Caki2 (cell line): ENCODE measurements at regions of chr2 and their contacts with region 1.

Region 1: DNA sequence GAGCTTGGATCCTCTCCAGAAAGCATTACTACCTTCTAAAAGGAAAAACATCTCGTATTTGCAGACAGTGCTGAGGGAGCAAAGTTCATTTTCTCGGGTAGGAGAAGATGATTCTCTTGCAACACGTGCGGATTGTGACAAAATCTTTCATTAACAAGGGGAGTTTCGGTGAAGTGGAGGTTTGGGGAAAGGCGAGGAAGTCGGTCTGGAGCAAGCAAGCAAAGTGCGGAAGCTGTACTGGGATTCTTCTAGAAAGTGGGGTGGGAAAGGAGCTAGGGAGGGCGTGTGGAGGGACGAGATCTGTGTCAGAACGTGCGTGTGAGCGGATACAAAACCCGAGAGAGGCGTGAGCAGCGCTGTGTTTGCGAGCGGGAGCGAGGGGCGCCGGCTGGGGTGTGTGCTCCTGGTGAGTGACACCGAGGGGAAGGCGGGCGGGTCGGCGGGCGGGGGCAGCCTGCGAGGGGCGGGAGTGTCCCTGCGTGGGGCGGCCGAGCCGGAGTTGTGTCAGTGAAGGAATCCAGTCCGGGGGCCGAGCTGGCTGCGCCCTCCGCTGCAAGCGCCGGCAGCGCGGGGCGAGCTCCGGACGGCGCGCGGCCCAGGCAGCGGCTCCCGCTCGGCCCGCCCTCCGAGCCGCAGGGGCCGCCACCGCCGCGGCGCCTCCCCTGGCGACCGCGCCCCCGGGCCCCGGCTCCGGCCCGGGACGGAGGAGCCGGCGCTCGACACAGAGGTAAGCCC is at the start of gene SPATS2L:
- DNase-seq: peak; percentile 71
- total RNA-seq, gene SPATS2L: 11.9 and 34.6 TPM in 2 replicates

Region 2: DNA sequence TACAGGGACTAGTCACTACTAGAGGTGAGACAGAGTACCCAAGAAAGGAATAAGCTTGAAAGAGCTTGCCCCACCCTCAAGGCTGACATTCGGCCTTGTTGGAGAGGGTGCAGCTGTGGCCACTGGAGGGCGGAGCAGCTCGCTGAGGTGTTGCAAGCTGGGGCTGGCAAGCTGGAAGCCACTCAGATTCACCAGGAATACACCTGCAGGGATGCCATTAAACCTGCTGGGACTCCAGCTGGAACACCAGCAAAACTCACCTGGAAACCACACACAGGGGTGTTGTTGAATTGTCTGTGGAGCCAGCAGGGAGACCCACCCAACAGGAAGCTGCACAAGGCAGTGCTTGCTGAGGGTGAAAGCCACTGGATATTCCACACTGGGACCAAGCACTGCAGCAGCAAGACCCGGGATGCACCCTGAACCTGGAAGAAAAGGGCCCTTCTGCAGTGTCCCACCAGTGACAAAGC is 177.4 kb after region 1 on chr2:
- in situ Hi-C with region 1: loop called (anchors 25 kb)
- DNase-seq: peak; percentile 47